ENCODE measurements at regions of chr22 and their contacts with region 1.

Region 1: DNA sequence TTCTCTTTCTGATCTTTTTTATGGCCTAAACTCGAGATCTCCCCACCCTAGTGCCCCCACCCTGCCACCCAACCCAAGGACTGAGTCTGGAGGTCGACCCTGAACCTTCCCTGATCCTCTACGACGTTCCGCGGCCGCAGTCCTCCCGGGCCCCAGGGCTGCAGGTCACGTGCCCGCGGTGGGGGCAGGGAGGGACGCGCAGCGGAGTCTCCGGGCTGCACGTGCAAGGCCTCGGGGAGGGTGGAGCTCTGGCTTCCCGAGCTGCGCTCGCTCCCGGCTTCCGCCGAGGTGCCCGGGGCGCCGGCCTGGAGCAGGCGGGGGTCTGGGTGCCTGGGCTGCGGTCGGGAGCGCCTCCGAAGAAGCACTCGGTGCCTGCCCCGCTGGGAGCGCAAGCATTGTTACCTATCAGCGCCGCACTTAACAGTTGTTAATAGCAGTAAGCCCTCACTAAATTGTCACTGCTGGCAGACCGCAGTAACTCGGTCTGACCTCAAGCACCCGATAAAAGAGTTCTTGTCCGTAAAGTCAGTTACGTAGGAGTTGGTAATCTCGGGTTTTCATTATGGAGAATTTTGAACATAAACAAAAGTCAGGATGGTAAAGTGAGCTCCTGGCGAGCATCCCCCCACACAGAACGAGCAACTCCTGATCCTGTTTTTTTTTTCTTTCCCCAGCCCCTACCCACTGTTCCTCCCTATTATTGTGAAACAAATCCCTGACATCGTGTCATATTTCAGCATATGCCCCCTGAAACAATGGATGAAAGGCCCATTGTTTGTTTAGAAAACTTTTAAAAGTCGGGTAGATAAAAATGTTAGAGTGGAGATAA is 69.7 kb upstream of the EP300 start:
- DNase-seq: peak; percentile 86
- H3K4me3 Mint-ChIP-seq: peak overlapping the region; percentile 88
- H3K27ac Mint-ChIP-seq: peak overlapping the region; percentile 97
- H3K4me1 Mint-ChIP-seq: peaks cover 6% of the 10 kb centered on the region
- H3K27me3 Mint-ChIP-seq: no peaks in the 10 kb centered on the region
- CTCF ChIP-seq: no peak

Region 2: DNA sequence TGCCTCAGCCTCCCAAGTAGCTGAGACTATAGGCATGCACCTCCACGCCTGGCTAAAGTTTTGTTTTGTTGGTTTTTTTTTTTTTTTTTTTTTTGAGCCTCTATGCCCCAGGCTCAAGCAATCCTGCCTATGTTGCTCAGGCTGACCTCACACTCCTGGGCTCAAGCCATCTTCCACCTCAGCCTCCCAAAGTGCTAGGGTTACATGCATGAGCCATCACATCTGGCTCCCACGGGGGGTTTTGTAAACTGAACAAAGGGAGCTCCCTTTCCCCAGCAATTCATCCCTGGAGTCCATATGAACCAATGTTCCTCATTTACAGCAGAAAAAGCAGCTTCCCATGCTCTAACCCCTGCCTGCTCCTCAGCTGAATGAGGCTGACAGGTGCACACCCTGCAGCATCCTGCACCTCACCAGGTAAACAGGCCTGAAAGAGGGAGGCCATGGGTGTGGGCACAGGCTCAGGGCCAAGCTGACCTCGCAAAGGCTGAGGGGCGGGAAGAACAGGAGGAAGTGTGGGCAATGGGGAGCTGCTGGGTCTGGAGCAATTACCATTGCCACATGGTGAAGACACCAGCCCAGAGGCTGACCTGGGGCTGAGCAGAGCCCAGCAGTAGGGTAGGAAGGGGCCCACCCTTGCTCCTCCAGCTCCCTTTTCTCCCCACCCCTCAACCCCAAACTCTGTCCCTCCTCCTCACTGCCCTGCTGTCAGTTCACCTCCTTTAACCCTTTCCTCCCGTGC is 13.3 kb before region 1 on chr22:
- CTCF ChIA-PET with region 1: no interaction called
- POLR2A ChIA-PET with region 1: interaction called, 14 read pairs
- intact Hi-C with region 1: no loop called
- DNase-seq: peak; percentile 69
- H3K4me3 Mint-ChIP-seq: no peak overlapping the region
- H3K27ac Mint-ChIP-seq: no peak overlapping the region
- H3K4me1 Mint-ChIP-seq: no peaks in the 10 kb centered on the region
- H3K27me3 Mint-ChIP-seq: no peaks in the 10 kb centered on the region
- CTCF ChIP-seq: no peak

Region 3: DNA sequence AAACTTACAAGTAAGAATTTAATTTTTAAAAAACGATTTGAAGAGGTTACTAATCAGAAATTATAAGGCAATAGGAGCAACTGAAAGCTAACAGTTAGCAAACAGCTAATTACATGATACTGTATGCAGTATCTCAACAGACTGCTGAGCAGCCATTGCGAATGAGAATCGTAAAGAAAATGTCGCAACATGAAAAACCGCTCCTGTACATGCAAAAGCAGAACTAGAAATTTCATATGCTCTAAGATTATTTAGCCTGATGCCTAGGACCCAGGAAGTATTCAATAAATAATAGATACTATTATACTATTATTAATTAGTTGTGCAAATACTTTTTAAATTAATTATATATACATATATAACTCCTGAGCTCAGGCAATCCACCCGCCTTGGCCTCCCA is 21.0 kb after region 1 on chr22:
- CTCF ChIA-PET with region 1: no interaction called
- POLR2A ChIA-PET with region 1: interaction called, 14 read pairs
- intact Hi-C with region 1: no loop called
- DNase-seq: no peak
- H3K4me3 Mint-ChIP-seq: no peak overlapping the region
- H3K27ac Mint-ChIP-seq: no peak overlapping the region
- H3K4me1 Mint-ChIP-seq: peaks cover 5% of the 10 kb centered on the region
- H3K27me3 Mint-ChIP-seq: no peaks in the 10 kb centered on the region
- CTCF ChIP-seq: no peak

Region 4: DNA sequence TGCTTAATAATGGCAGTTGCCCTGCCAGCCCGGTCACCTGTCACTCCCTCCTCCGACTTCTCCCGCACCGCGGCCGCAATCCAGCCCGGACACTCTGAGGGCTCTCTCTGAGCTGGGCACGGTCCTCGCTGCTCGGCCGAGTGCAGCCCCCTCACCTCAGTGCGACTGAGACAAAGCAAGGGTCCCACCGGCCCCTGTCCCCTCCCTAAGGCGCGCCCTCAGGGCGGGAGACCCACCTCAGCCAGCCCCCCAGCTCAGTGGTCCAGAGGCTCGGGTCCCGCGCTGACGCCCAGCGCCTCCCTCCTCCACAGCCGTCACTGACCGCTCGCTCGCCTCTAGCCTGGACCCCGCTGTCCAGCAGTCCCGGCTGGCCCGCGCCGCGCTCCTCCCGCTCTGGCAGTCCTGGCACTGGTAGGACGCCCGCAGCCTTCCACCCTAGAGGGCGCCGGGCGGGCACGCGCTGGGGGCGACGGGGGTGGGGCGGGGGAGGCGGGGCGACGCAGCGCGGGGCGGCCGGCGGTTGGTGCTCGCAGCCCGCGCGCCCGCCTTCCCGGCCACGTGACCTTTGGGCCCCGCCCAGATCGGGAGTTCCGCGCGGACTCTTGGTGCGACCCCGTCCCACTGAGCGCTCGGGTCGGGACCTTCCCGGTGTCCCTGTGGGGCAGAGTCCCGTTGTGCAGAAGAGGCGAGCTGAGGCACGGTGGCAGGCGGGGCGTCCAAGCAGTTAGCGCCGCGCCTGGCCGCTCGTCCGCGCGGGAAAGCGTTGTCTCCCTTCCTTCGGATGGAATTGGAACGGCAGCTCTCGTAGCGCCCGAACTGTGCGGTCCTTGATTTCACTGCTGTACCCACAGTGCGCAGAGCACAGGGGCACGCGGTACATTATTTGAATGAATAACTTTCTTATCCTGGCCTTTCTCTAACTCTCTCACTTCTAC is 174.6 kb after region 1 on chr22:
- CTCF ChIA-PET with region 1: no interaction called
- POLR2A ChIA-PET with region 1: interaction called, 21 read pairs
- intact Hi-C with region 1: no loop called
- DNase-seq: peak; percentile 74
- H3K4me3 Mint-ChIP-seq: peak overlapping the region; percentile 74
- H3K27ac Mint-ChIP-seq: peak overlapping the region; percentile 17
- H3K4me1 Mint-ChIP-seq: peaks cover 17% of the 10 kb centered on the region
- H3K27me3 Mint-ChIP-seq: no peaks in the 10 kb centered on the region
- CTCF ChIP-seq: no peak